ENCODE measurements at regions of chr22 and their contacts with region 1.

Region 1: DNA sequence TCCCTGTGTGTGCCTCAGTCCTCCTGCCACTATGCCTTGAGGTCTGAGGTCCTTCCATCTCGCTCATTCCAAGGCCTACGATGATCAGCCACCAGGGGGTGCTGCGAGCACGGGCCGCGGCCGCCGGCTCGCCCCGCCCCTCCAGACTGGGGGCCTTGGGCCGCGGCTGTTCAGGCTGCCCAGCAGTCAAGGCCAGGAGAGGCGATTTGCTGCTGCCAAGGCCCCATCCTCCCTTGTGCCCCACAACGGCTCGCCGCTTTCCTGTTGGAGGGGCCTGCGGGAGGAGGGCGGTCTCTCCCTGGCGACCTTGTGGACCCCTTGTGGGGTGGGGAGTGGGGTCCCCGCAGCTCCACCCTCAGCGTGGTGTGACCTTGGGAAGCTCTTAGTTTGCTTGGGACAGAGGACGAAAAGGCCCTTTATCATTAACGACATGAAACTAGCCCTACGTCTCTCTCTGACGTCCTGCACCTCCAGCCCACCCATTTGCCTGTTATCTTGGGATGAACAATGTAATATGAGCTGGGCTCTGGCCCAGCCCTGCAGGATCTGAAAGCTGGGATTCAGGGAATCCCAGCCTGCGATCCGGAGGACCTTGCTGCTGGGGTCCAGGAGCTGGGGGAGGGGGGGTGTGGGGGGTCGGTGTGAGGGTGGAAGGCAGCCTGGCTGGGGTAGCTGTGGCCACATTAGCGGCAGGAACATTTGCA is 5.3 kb upstream of the GALR3 start:
- DNase-seq: peak; percentile 55 to 95 (median 87)

Region 2: GRCh38 chr22:37862570-37863325 is 44.9 kb after region 1 on chr22:
- intact Hi-C with region 1: loop called (anchors 2 kb)
- DNase-seq: peak in 4 of 42 donors; percentile 11 to 26 (median 23)

Region 3: GRCh38 chr22:37965940-37966664 is 148.2 kb after region 1 on chr22:
- intact Hi-C with region 1: loop called (anchors 10 kb)
- DNase-seq: no peak